ENCODE measurements at regions of chr2 and their contacts with region 1.

Region 1: DNA sequence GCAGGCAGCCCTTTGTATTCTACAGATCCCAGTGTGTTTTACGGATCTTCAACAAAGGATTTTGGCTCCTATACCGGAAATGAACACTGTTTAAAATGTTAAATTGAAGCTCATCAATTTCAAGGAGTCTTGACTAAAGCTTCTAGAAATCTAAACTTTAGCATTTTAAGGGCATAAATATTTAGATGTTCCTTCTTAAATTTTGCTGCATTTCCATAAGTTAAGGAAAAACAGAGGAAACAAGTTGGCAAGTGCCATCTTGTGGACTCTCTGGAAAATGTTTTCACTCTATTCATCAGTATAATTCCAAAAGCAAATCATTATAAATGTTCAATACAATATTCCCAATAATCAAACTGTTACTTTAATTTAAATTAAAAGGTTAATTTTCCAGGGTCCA is 19.6 kb downstream of the CHN1 start:
- DNase-seq: peak; percentile 56
- H3K4me3 ChIP-seq: no peak overlapping the region
- H3K27ac ChIP-seq: no peak overlapping the region
- H3K4me1 ChIP-seq: peaks cover 7% of the 10 kb centered on the region
- H3K27me3 ChIP-seq: peaks cover 4% of the 10 kb centered on the region
- CTCF ChIP-seq: peak; percentile 72

Region 2: GRCh38 chr2:174663550-174663949 is 322.1 kb before region 1 on chr2:
- CTCF ChIA-PET with region 1: no interaction called
- POLR2A ChIA-PET with region 1: no interaction called
- intact Hi-C with region 1: no loop called
- DNase-seq: peak; percentile 38
- H3K4me3 ChIP-seq: no peak overlapping the region
- H3K27ac ChIP-seq: no peak overlapping the region
- H3K4me1 ChIP-seq: no peaks in the 10 kb centered on the region
- H3K27me3 ChIP-seq: no peaks in the 10 kb centered on the region
- CTCF ChIP-seq: no peak

Region 3: DNA sequence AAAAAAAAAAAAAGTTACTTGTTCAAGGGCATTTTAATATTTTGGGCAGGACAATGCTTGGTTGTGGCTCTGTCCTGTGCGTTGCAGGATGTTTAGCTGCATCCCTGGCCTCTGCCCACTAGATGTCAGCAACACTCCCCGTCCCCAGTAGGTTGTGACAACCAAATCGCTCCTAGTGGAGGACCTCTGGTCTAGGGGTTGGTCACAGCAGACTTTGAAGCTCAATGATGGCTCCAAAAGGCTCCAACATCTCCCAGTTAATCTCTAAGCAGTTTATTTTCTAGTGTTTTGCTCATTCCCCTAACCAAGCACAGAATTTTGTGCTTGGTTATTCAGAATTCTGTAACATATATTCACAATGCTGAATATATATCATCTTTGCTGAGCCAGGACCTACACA is 288.4 kb before region 1 on chr2:
- CTCF ChIA-PET with region 1: no interaction called
- POLR2A ChIA-PET with region 1: interaction called, 3 read pairs
- intact Hi-C with region 1: loop called (anchors 5 kb)
- DNase-seq: peak; percentile 63
- H3K4me3 ChIP-seq: no peak overlapping the region
- H3K27ac ChIP-seq: no peak overlapping the region
- H3K4me1 ChIP-seq: no peaks in the 10 kb centered on the region
- H3K27me3 ChIP-seq: peaks cover 18% of the 10 kb centered on the region
- CTCF ChIP-seq: peak; percentile 83

Region 4: DNA sequence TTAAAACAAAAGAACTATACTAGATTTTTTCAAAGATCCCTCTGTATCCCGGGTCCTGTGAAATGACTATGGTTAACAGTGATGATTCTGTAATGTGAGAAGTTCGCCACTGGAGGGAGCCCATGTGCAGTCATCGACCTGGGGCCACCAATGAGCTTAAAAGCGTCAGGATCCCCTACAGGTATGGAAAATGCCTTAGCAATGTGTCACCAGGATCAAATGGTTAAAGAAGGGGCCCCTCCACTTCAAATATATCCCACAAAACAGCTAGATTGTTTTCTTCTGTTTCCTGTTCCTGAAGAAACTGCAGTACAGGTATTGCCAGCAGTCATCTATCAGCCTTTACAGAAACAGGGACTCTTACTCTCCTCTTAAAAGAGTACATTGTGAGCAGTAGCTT is 236.7 kb before region 1 on chr2:
- CTCF ChIA-PET with region 1: interaction called, 4 read pairs
- POLR2A ChIA-PET with region 1: no interaction called
- intact Hi-C with region 1: loop called (anchors 2 kb)
- DNase-seq: peak; percentile 62
- H3K4me3 ChIP-seq: no peak overlapping the region
- H3K27ac ChIP-seq: no peak overlapping the region
- H3K4me1 ChIP-seq: no peaks in the 10 kb centered on the region
- H3K27me3 ChIP-seq: peaks cover 3% of the 10 kb centered on the region
- CTCF ChIP-seq: peak; percentile 81

Region 5: GRCh38 chr2:174771631-174772471 is 213.8 kb before region 1 on chr2:
- CTCF ChIA-PET with region 1: interaction called, 11 read pairs
- POLR2A ChIA-PET with region 1: no interaction called
- intact Hi-C with region 1: loop called (anchors 1 kb)
- DNase-seq: peak; percentile 70
- H3K4me3 ChIP-seq: no peak overlapping the region
- H3K27ac ChIP-seq: no peak overlapping the region
- H3K4me1 ChIP-seq: no peaks in the 10 kb centered on the region
- H3K27me3 ChIP-seq: no peaks in the 10 kb centered on the region
- CTCF ChIP-seq: peak; percentile 82

Region 6: DNA sequence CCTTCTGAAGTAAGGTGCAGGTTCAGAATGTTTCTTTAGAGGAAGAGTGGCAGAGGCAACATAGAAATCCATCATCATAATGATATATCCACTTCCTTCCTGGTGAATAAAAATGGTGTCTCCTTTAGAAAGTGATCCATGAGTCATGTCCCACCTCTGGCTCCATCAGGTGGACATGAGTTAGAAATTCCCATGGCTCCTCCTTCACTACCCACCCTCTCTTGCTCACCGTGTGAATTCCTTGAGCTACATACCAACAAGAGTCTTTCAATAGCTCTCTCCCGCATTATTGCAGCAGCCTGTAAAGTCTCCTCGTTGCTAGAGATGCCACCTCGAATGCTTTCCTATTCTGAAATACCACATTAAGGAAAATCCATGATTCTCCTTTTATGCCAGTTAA is 698.8 kb after region 1 on chr2:
- CTCF ChIA-PET with region 1: no interaction called
- POLR2A ChIA-PET with region 1: no interaction called
- intact Hi-C with region 1: no loop called
- DNase-seq: no peak
- H3K4me3 ChIP-seq: no peak overlapping the region
- H3K27ac ChIP-seq: no peak overlapping the region
- H3K4me1 ChIP-seq: no peaks in the 10 kb centered on the region
- H3K27me3 ChIP-seq: no peaks in the 10 kb centered on the region
- CTCF ChIP-seq: no peak